ENCODE measurements at regions of chr10 and their contacts with region 1.

Region 1: GRCh38 chr10:42782446-42783180 is at the start of gene BMS1:
- DNase-seq: peak; percentile 82 to 92 (median 87)
- ATAC-seq: peak; percentile 85
- H3K4me3 ChIP-seq: peak within 1 kb of the TSS; percentile 83 to 88
- H3K4me3 Mint-ChIP-seq: peak within 1 kb of the TSS; percentile 99
- H3K27ac ChIP-seq: peak within 1 kb of the TSS; percentile 78 to 90
- H3K27ac Mint-ChIP-seq: peak within 1 kb of the TSS; percentile 96
- H3K4me1 ChIP-seq: peaks cover 23% of the 10 kb centered on the region
- H3K4me1 Mint-ChIP-seq: peaks cover 42% of the 10 kb centered on the region
- H3K27me3 ChIP-seq: no peaks in the 10 kb centered on the region
- H3K27me3 Mint-ChIP-seq: peaks cover 4% of the 10 kb centered on the region
- CTCF ChIP-seq: no peak
- total RNA-seq, gene BMS1: 18.1 to 19.9 TPM

Region 2: DNA sequence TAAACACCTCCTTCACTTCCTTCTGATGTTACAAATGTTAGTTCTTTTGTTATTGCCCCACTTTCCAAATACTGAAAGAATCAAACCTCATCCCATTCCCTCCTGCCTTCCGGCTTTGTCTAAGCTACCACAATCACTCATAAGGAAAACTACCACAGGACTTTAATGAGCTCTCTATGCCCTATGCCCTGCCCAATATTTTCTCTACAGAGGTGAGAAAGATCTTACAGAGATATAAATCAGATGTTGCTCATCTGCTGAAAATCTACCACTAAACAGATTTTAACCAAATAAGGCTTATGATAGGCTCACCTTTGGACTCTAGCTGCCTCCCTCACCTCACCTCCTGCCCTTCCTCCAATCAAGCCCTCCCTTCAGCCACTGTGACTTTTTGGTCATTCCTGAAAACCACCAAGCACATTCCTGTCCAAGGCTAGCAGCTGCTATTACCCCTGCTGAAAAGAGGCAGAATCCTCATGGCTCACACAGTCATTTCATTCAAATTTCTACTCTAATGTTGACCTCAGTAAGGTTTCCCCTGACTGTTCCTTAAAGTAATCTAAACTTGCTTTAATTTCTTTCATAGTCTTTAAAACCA is 152.0 kb before region 1 on chr10:
- CTCF ChIA-PET with region 1: no interaction called
- POLR2A ChIA-PET with region 1: no interaction called
- intact Hi-C with region 1: loop called in 1 of 2 experiments (anchors 2 kb)
- DNase-seq: peak in 1 of 9 experiments; percentile 11
- ATAC-seq: no peak
- H3K4me3 ChIP-seq: no peak overlapping the region
- H3K4me3 Mint-ChIP-seq: no peak overlapping the region
- H3K27ac ChIP-seq: peak overlapping the region; percentile 12 to 61
- H3K27ac Mint-ChIP-seq: peak overlapping the region; percentile 76
- H3K4me1 ChIP-seq: peaks cover 11% of the 10 kb centered on the region
- H3K4me1 Mint-ChIP-seq: peaks cover 44% of the 10 kb centered on the region
- H3K27me3 ChIP-seq: no peaks in the 10 kb centered on the region
- H3K27me3 Mint-ChIP-seq: no peaks in the 10 kb centered on the region
- CTCF ChIP-seq: no peak

Region 3: DNA sequence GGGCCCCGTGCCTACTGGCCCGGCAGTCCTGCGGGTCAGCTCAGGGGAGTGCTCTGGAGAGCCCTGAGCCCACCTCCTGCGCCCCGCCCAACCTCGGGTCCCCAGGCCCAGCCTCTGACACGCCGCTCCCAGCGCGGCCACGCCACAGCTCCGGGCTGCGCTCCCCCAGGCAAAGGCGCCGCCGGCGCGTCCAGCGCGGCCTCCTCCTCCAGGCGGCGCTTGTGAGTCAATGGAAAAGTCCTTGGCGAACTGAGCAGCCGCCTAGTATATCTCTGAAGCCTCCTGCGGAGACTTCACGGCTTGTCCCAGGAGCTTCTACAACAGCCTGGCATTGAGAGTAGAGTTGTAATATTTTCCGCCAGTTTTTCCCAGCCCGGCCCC is 29.5 kb before region 1 on chr10:
- CTCF ChIA-PET with region 1: interaction called, 4 read pairs
- POLR2A ChIA-PET with region 1: no interaction called
- intact Hi-C with region 1: loop called in 1 of 2 experiments (anchors 1 kb)
- DNase-seq: peak; percentile 28 to 79 (median 62)
- ATAC-seq: peak; percentile 63
- H3K4me3 ChIP-seq: peak overlapping the region; percentile 47 to 71
- H3K4me3 Mint-ChIP-seq: peak overlapping the region; percentile 82
- H3K27ac ChIP-seq: no peak overlapping the region
- H3K27ac Mint-ChIP-seq: no peak overlapping the region
- H3K4me1 ChIP-seq: peaks cover 14% of the 10 kb centered on the region
- H3K4me1 Mint-ChIP-seq: peaks cover 6% of the 10 kb centered on the region
- H3K27me3 ChIP-seq: peaks cover 32 to 35% of the 10 kb centered on the region in 2 experiments
- H3K27me3 Mint-ChIP-seq: peaks cover 55% of the 10 kb centered on the region
- CTCF ChIP-seq: peak; percentile 62

Region 4: GRCh38 chr10:42809670-42810069 is 27.1 kb after region 1 on chr10:
- CTCF ChIA-PET with region 1: no interaction called
- POLR2A ChIA-PET with region 1: no interaction called
- intact Hi-C with region 1: no loop called
- DNase-seq: no peak
- ATAC-seq: no peak
- H3K4me3 ChIP-seq: no peak overlapping the region
- H3K4me3 Mint-ChIP-seq: no peak overlapping the region
- H3K27ac ChIP-seq: no peak overlapping the region
- H3K27ac Mint-ChIP-seq: no peak overlapping the region
- H3K4me1 ChIP-seq: no peaks in the 10 kb centered on the region
- H3K4me1 Mint-ChIP-seq: peaks cover 22% of the 10 kb centered on the region
- H3K27me3 ChIP-seq: no peaks in the 10 kb centered on the region
- H3K27me3 Mint-ChIP-seq: no peaks in the 10 kb centered on the region
- CTCF ChIP-seq: no peak

Region 5: DNA sequence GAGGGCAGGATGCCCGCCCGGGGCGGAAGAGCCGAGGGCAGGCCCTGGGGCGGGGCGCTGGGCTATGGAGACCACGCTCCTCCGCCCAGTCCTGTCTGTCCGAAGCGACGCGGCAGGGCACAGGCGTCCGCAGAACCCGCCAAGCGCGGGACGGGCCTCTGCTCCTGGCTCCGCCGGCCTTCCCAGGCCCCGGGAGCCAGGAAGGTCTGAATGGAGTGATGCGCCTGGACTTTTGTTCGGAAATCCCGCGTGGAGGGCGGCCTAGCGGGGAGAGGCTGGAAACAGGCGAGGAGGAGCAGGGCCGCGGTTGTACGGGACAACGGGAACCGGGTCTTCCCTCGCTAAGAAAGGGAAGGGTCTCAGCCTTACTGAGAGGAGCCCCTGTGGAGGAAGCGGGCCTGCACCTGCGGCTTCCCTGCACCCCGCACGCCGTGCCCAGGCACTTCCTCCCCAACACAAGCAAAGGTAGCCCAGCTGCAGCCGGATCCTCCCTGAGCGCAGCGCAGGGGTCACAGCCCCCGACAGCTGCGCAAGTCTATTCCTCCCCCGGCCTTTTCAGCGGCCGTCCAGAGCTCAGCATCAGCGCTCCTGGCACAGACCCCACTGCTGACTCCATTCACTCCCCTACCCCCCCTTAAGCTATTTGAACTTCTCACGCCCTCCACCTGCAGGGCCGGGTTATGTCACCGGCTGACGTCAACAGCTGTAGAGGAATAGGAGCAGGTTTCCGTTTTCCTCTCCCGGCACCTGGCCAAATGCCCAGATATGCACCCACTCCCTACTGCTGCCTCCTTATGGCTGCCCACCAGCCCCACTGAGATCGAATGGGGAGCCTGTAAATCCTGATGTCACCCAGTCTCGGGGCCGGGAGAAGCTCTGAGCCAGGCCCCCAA is 151.1 kb after region 1 on chr10:
- CTCF ChIA-PET with region 1: no interaction called
- POLR2A ChIA-PET with region 1: interaction called, 4 read pairs
- intact Hi-C with region 1: loop called (anchors 1 to 10 kb)
- DNase-seq: peak in 6 of 9 experiments; percentile 33 to 79 (median 64)
- ATAC-seq: peak; percentile 64
- H3K4me3 ChIP-seq: peak overlapping the region; percentile 51 to 78
- H3K4me3 Mint-ChIP-seq: peak overlapping the region; percentile 85
- H3K27ac ChIP-seq: peak overlapping the region; percentile 19 to 73
- H3K27ac Mint-ChIP-seq: peak overlapping the region; percentile 80
- H3K4me1 ChIP-seq: peaks cover 17% of the 10 kb centered on the region
- H3K4me1 Mint-ChIP-seq: peaks cover 12% of the 10 kb centered on the region
- H3K27me3 ChIP-seq: no peaks in the 10 kb centered on the region
- H3K27me3 Mint-ChIP-seq: peaks cover 13% of the 10 kb centered on the region
- CTCF ChIP-seq: no peak

Region 6: GRCh38 chr10:43574001-43574892 is 791.6 kb after region 1 on chr10 and contains the start of gene ZNF239:
- CTCF ChIA-PET with region 1: no interaction called
- POLR2A ChIA-PET with region 1: no interaction called
- intact Hi-C with region 1: loop called (anchors 1 to 10 kb)
- DNase-seq: peak; percentile 62 to 93 (median 82)
- ATAC-seq: peak; percentile 88
- H3K4me3 ChIP-seq: peak within 1 kb of the TSS; percentile 43 to 63
- H3K4me3 Mint-ChIP-seq: peak within 1 kb of the TSS; percentile 85
- H3K27ac ChIP-seq: peak within 1 kb of the TSS; percentile 38 to 66
- H3K27ac Mint-ChIP-seq: peak within 1 kb of the TSS; percentile 90
- H3K4me1 ChIP-seq: peaks cover 25% of the 10 kb centered on the region
- H3K4me1 Mint-ChIP-seq: peaks cover 51% of the 10 kb centered on the region
- H3K27me3 ChIP-seq: no peaks in the 10 kb centered on the region
- H3K27me3 Mint-ChIP-seq: no peaks in the 10 kb centered on the region
- CTCF ChIP-seq: no peak
- total RNA-seq, gene ZNF239: 0.75 to 1.1 TPM

Region 7: DNA sequence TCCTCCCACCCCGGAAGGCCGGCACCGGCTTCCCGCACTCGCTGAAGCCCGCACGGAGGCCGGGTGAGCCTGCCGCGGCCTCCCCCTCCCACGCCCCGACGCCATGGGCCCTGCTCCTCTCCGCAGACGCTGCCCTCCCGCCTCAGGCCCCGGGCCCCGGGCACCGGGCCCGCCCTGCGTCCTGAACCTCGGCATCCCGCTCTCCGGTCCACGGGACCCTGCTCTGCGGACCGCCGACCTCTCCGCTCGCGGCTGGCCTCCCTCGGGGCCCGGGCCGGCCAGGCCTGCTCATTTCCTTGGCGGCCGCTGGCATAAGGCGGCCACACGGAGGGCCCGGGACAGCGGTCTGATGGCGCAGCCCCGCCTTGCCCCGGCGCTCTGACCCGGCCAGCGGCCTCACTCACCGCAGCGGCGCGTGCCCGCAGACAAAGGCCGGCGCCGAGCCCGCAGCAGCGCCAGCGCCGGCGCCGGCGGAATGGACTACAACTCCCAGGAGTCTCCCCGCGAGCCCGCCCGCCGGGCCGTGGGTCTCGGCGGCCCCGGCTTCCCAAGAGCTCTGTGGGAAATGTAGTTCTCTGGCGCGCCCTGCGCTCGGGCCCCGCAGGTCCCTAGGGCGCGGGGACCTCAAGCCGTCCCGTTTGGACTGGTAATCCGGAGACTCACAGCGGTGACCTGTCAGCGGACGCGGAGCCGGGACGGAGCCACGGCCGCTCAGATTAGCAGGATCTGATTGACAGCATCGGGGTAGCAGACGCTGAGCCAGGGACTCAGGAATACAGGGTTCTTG is 866.0 kb after region 1 on chr10 and contains the start of gene ZNF32:
- CTCF ChIA-PET with region 1: no interaction called
- POLR2A ChIA-PET with region 1: interaction called, 6 read pairs
- intact Hi-C with region 1: loop called (anchors 5 to 10 kb)
- DNase-seq: peak; percentile 60 to 89 (median 79)
- ATAC-seq: peak; percentile 97
- H3K4me3 ChIP-seq: peak within 1 kb of the TSS; percentile 74 to 92
- H3K4me3 Mint-ChIP-seq: peak within 1 kb of the TSS; percentile 97
- H3K27ac ChIP-seq: peak within 1 kb of the TSS; percentile 48 to 80
- H3K27ac Mint-ChIP-seq: peak within 1 kb of the TSS; percentile 92
- H3K4me1 ChIP-seq: peaks cover 14% of the 10 kb centered on the region
- H3K4me1 Mint-ChIP-seq: peaks cover 23% of the 10 kb centered on the region
- H3K27me3 ChIP-seq: no peaks in the 10 kb centered on the region
- H3K27me3 Mint-ChIP-seq: peaks cover 1% of the 10 kb centered on the region
- CTCF ChIP-seq: no peak
- total RNA-seq, gene ZNF32: 17.4 to 18.9 TPM